CD4-positive, alpha-beta memory T cell (primary cell): ENCODE measurements at regions of chr6 and their contacts with region 1.

Region 1: DNA sequence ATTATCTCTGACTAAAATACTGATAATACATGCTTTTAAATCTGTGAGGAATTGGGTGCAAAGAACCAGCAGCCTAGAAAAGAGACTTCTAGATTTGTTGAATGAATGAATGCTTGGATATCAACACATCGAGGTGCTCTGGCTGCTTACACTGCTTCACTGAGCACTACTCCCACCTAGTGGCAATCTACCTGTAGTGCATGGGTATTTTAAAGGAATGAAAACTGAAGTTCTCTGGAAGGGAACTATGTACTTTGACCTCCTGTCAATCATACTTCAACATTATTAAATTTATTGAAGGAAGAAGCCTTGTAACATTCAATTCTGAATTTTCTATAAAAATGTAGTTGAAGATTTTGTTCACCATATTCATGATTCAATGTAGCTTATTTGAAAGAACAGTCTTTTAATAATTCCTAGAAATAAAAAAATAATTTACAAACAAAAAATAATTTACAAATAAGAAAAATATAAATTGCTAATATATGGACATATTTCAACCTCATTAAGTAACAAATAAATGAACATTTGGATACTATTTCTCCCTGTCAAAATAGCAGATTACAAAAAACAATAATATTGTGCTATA is 111.2 kb upstream of the MMS22L start:
- DNase-seq: peak; percentile 40 to 58 (median 51)
- H3K4me3 ChIP-seq: no peak overlapping the region
- H3K4me3 Mint-ChIP-seq: no peak overlapping the region
- H3K27ac ChIP-seq: no peak overlapping the region
- H3K27ac Mint-ChIP-seq: no peak overlapping the region
- H3K4me1 ChIP-seq: no peaks in the 10 kb centered on the region
- H3K4me1 Mint-ChIP-seq: no peaks in the 10 kb centered on the region
- H3K27me3 ChIP-seq: no peaks in the 10 kb centered on the region
- H3K27me3 Mint-ChIP-seq: peaks cover 6 to 8% of the 10 kb centered on the region in 2 donors

Region 2: DNA sequence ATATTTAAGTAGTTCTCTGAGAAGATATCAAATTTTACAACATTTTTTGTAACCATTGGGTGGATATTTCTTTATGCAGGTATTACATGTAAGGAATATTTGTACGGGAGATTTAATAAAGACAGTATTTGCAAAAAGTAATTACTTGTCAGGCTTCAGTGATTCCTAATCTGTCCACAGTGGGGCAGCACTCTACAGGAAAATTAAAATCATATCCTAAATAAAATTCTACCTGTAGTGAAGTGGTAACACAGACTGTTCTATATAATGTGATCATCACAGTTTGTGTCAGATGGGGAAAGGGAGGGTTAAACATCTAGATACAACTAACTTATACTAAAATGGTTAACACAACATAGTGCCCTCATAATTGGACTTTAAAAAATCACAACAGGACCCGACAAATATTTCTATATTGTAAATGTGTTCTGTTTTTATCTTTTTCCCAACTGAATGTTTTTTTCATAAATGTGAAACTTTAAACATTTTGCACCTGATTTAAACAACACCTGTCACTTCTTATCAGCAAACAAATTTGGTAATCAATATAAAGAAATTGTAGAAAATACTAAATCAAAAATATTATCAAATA is 1962.5 kb before region 1 on chr6:
- CTCF ChIA-PET with region 1: no interaction called
- POLR2A ChIA-PET with region 1: no interaction called
- intact Hi-C with region 1: loop called (anchors 5 kb)
- DNase-seq: peak; percentile 18 to 39 (median 28)
- H3K4me3 ChIP-seq: no peak overlapping the region
- H3K4me3 Mint-ChIP-seq: no peak overlapping the region
- H3K27ac ChIP-seq: no peak overlapping the region
- H3K27ac Mint-ChIP-seq: no peak overlapping the region
- H3K4me1 ChIP-seq: no peaks in the 10 kb centered on the region
- H3K4me1 Mint-ChIP-seq: no peaks in the 10 kb centered on the region
- H3K27me3 ChIP-seq: no peaks in the 10 kb centered on the region
- H3K27me3 Mint-ChIP-seq: peaks cover 0 to 4% of the 10 kb centered on the region in 2 donors

Region 3: GRCh38 chr6:96626759-96627364 is 767.4 kb before region 1 on chr6:
- CTCF ChIA-PET with region 1: no interaction called
- POLR2A ChIA-PET with region 1: no interaction called
- intact Hi-C with region 1: loop called (anchors 1 kb)
- DNase-seq: peak in 4 of 5 donors; percentile 7 to 24 (median 17)
- H3K4me3 ChIP-seq: no peak overlapping the region
- H3K4me3 Mint-ChIP-seq: no peak overlapping the region
- H3K27ac ChIP-seq: no peak overlapping the region
- H3K27ac Mint-ChIP-seq: no peak overlapping the region
- H3K4me1 ChIP-seq: no peaks in the 10 kb centered on the region
- H3K4me1 Mint-ChIP-seq: no peaks in the 10 kb centered on the region
- H3K27me3 ChIP-seq: no peaks in the 10 kb centered on the region
- H3K27me3 Mint-ChIP-seq: peaks cover 3 to 6% of the 10 kb centered on the region in 2 donors

Region 4: DNA sequence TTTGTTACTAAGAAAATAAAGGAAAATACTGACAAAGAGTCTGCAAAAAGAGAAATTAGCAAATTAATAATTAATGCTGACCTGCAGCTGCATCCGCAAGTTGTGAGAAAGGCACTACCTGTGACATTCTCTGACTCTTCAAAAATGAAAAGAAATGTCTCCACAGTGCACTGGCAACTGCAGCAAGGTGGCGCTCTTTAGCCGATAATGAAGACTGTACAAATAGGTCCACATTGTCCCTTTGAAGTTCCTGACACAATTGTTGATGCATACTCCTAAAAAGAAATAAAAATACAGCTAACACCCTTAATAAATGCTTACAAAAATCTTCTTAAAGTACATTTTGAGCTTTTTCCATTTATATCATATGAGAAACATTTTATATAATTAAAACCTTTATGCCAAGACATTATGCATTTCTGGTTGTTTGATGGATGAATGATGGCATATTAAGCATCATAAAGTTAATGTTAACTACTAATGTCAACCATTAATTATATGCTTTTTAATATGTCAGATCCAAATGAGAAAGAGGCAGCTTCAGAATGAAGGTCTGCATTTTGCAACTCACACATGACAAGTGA is 207.7 kb before region 1 on chr6:
- CTCF ChIA-PET with region 1: interaction called, 79 read pairs
- POLR2A ChIA-PET with region 1: no interaction called
- intact Hi-C with region 1: loop called (anchors 1 kb)
- DNase-seq: peak; percentile 42 to 59 (median 55)
- H3K4me3 ChIP-seq: no peak overlapping the region
- H3K4me3 Mint-ChIP-seq: no peak overlapping the region
- H3K27ac ChIP-seq: no peak overlapping the region
- H3K27ac Mint-ChIP-seq: no peak overlapping the region
- H3K4me1 ChIP-seq: no peaks in the 10 kb centered on the region
- H3K4me1 Mint-ChIP-seq: peaks cover 0 to 2% (median under 1%) of the 10 kb centered on the region in 4 donors
- H3K27me3 ChIP-seq: no peaks in the 10 kb centered on the region
- H3K27me3 Mint-ChIP-seq: no peaks in the 10 kb centered on the region

Region 5: GRCh38 chr6:97215157-97215769 is 179.0 kb before region 1 on chr6:
- CTCF ChIA-PET with region 1: interaction called, 3 read pairs
- POLR2A ChIA-PET with region 1: no interaction called
- intact Hi-C with region 1: loop called (anchors 1 kb)
- DNase-seq: no peak
- H3K4me3 ChIP-seq: no peak overlapping the region
- H3K4me3 Mint-ChIP-seq: no peak overlapping the region
- H3K27ac ChIP-seq: no peak overlapping the region
- H3K27ac Mint-ChIP-seq: no peak overlapping the region
- H3K4me1 ChIP-seq: no peaks in the 10 kb centered on the region
- H3K4me1 Mint-ChIP-seq: peaks cover 0 to 5% (median 0%) of the 10 kb centered on the region in 4 donors
- H3K27me3 ChIP-seq: no peaks in the 10 kb centered on the region
- H3K27me3 Mint-ChIP-seq: no peaks in the 10 kb centered on the region

Region 6: GRCh38 chr6:97450087-97450486 is 55.8 kb after region 1 on chr6:
- CTCF ChIA-PET with region 1: no interaction called
- POLR2A ChIA-PET with region 1: no interaction called
- intact Hi-C with region 1: no loop called
- DNase-seq: no peak
- H3K4me3 ChIP-seq: no peak overlapping the region
- H3K4me3 Mint-ChIP-seq: no peak overlapping the region
- H3K27ac ChIP-seq: no peak overlapping the region
- H3K27ac Mint-ChIP-seq: no peak overlapping the region
- H3K4me1 ChIP-seq: no peaks in the 10 kb centered on the region
- H3K4me1 Mint-ChIP-seq: no peaks in the 10 kb centered on the region
- H3K27me3 ChIP-seq: no peaks in the 10 kb centered on the region
- H3K27me3 Mint-ChIP-seq: peaks cover 7 to 8% of the 10 kb centered on the region in 2 donors